Transverse colon (tissue), 4 donors: ENCODE measurements at regions of chr12 and their contacts with region 1.

Region 1: DNA sequence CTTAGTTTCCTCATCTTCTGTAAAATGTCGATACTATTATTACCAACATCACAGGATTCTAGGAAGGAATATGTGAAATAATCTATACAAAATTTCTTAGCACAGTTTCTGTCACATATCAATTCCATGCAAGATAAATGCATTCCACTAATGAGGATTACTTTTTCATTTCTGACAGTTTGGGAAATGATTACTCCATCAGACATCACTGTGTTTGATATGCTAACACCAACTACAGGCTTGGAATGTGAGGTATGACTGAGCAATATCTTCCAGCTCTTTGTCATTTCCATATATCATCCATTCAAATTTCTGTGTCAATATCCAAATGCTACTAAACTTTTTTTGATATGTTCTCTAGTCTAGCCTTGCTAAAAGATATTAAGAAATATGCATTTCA is 111.2 kb upstream of the PTPRQ start:
- DNase-seq: no peak
- H3K4me3 ChIP-seq: no peak overlapping the region
- H3K27ac ChIP-seq: no peak overlapping the region
- H3K4me1 ChIP-seq: no peaks in the 10 kb centered on the region
- H3K27me3 ChIP-seq: no peaks in the 10 kb centered on the region
- CTCF ChIP-seq: no peak
- EP300 ChIP-seq: no peak
- POLR2A ChIP-seq: no peak

Region 2: GRCh38 chr12:80432055-80432454 is 99.2 kb after region 1 on chr12:
- in situ Hi-C with region 1: no loop called
- intact Hi-C with region 1: no loop called
- DNase-seq: no peak
- H3K4me3 ChIP-seq: no peak overlapping the region
- H3K27ac ChIP-seq: no peak overlapping the region
- H3K4me1 ChIP-seq: no peaks in the 10 kb centered on the region
- H3K27me3 ChIP-seq: no peaks in the 10 kb centered on the region
- CTCF ChIP-seq: no peak
- EP300 ChIP-seq: no peak
- POLR2A ChIP-seq: no peak

Region 3: GRCh38 chr12:80559766-80560165 is 226.9 kb after region 1 on chr12:
- in situ Hi-C with region 1: no loop called
- intact Hi-C with region 1: loop called (anchors 5 kb)
- DNase-seq: no peak
- H3K4me3 ChIP-seq: no peak overlapping the region
- H3K27ac ChIP-seq: no peak overlapping the region
- H3K4me1 ChIP-seq: no peaks in the 10 kb centered on the region
- H3K27me3 ChIP-seq: no peaks in the 10 kb centered on the region
- CTCF ChIP-seq: no peak
- EP300 ChIP-seq: no peak
- POLR2A ChIP-seq: no peak